B cell (primary cell): ENCODE measurements at regions of chr17 and their contacts with region 1.

Region 1: DNA sequence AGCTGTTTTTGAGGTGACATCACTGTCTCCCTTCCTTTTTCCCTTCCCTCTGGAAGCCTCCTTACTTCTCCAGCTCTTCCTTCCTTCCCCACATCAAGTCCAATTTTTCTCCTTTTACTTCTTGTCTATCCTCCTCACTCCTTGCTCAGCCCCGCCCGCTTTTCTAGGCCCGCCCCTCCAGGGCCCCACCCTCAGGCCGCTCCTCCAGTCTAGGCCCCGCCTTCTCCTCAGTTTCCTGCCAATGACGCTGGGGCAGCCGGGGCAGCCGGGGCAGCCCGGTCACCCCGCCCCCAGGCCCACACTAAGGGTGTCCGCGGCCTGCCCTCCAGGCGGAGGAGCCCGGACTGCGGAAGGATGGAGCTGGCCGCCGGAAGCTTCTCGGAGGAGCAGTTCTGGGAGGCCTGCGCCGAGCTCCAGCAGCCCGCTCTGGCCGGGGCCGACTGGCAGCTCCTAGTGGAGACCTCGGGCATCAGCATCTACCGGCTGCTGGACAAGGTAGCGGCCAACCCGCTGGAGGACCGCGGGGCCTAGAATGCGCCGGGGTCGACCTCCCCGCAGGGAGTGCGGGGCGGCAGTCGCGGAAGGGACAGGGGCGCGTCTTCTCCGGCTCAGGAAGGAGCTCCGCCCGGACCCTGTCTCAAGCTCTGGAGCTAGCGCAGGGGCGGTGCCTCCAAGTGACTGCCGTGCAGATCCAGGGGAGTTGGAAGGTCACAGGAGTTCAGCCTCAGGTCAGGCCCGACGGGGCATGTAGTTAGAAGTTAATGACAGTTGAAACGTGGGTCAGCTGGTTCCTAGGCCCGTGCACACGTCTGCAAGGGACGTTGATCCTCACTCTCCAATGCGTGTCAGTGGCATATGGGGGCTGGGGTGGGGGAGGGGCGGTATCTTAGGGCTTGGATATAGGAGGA is at the start of gene PCTP:
- DNase-seq: peak; percentile 84
- ATAC-seq: peak; percentile 98
- H3K4me3 ChIP-seq: peak within 1 kb of the TSS; percentile 40 to 93 (median 77)
- H3K4me3 Mint-ChIP-seq: peak within 1 kb of the TSS; percentile 84
- H3K27ac ChIP-seq: peak within 1 kb of the TSS; percentile 24 to 33
- H3K27ac Mint-ChIP-seq: peak within 1 kb of the TSS; percentile 22
- H3K4me1 ChIP-seq: peaks cover 5 to 11% of the 10 kb centered on the region in 2 donors
- H3K4me1 Mint-ChIP-seq: peaks cover 14% of the 10 kb centered on the region
- H3K27me3 ChIP-seq: peaks cover 0 to 4% (median 2%) of the 10 kb centered on the region in 4 experiments
- H3K27me3 Mint-ChIP-seq: peaks cover 23% of the 10 kb centered on the region
- CTCF ChIP-seq: peak; percentile 52
- total RNA-seq, gene PCTP: 6.4 and 9.0 TPM in 2 replicates

Region 2: DNA sequence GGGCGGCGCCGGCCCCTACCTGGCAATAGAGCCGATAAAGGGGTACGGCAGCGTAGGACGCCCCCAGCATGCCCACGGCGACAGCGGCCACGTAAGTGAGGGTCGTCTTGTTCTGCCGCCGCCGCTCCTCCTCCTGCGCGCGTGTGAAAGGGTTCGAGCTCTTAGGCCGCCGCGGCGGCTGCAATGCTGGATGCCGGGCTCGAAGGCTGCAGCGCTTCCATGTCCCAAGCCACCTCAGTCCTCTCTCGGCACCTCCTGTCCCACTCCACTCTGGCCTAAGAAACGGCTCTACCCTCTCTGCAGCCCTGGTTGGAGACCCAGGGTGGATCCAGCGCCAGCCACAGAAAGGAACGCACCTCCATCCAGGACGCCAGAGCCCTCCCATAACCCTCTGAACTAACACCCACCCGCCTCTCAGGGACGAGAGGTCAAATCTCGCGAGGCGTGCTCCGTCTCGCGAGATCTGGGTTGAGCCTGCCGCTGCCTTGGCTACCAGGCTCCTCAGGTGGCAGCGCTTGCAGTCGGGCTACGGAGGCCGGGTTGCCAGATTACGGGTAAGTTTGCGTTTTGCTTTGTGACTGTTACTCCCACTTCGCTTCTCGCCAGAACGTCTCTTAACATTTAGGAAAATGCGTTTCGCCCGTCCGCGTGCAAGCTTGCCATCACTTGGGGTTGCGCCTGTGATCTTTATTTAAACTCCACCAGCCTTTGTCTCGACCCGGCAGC is 782.6 kb before region 1 on chr17 and contains the starts of genes COX11 and STXBP4:
- CTCF ChIA-PET with region 1: no interaction called
- POLR2A ChIA-PET with region 1: no interaction called
- intact Hi-C with region 1: loop called (anchors 1 kb)
- DNase-seq: peak; percentile 98
- ATAC-seq: peak; percentile 96
- H3K4me3 ChIP-seq: peak within 1 kb of the TSS; percentile 69 to 96 (median 91)
- H3K4me3 Mint-ChIP-seq: no peak within 1 kb of the TSS
- H3K27ac ChIP-seq: peak within 1 kb of the TSS; percentile 47 to 80
- H3K27ac Mint-ChIP-seq: no peak within 1 kb of the TSS
- H3K4me1 ChIP-seq: peaks cover 8 to 21% of the 10 kb centered on the region in 2 donors
- H3K4me1 Mint-ChIP-seq: peaks cover 26% of the 10 kb centered on the region
- H3K27me3 ChIP-seq: no peaks in the 10 kb centered on the region
- H3K27me3 Mint-ChIP-seq: no peaks in the 10 kb centered on the region
- CTCF ChIP-seq: peak; percentile 12
- total RNA-seq, gene COX11: 54.9 and 63.7 TPM in 2 replicates
- total RNA-seq, gene STXBP4: 11.4 and 12.3 TPM in 2 replicates

Region 3: DNA sequence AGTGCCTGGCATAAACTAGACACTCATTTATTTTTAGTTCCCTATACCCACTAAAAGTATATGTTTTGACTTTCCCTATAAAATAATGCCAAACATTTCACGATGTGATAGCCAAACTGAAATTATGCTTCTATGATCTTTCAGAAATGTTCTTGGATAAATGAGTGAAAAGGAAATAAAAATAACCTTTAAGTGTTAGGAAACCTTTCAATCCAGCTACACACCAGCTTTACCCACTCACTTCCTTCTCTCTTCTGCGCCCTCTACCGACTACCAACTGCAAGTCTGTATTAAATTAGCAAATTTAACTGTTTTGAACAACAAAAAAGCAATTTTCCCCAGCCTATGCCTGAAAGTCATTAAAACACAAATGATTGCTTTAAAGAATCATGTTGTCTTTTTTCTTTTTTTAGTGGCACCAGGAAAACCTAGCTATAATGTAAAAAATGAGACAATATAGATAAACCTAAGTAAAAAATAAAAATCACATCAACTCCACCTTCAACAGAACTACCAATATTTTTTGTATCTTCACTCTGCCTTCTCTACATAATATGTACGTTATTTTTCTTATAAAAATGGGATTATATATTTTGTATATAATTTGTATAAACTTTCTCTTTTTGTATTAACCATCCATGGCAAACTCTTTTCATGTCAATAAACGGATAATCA is 15.1 kb before region 1 on chr17:
- CTCF ChIA-PET with region 1: interaction called, 19 read pairs
- POLR2A ChIA-PET with region 1: no interaction called
- intact Hi-C with region 1: no loop called
- DNase-seq: peak; percentile 54
- ATAC-seq: peak; percentile 60
- H3K4me3 ChIP-seq: no peak overlapping the region
- H3K4me3 Mint-ChIP-seq: no peak overlapping the region
- H3K27ac ChIP-seq: no peak overlapping the region
- H3K27ac Mint-ChIP-seq: no peak overlapping the region
- H3K4me1 ChIP-seq: peaks cover 6% of the 10 kb centered on the region in 2 donors
- H3K4me1 Mint-ChIP-seq: peaks cover 7% of the 10 kb centered on the region
- H3K27me3 ChIP-seq: peaks cover 0 to 3% (median 0%) of the 10 kb centered on the region in 4 experiments
- H3K27me3 Mint-ChIP-seq: peaks cover 33% of the 10 kb centered on the region
- CTCF ChIP-seq: peak; percentile 79

Region 4: DNA sequence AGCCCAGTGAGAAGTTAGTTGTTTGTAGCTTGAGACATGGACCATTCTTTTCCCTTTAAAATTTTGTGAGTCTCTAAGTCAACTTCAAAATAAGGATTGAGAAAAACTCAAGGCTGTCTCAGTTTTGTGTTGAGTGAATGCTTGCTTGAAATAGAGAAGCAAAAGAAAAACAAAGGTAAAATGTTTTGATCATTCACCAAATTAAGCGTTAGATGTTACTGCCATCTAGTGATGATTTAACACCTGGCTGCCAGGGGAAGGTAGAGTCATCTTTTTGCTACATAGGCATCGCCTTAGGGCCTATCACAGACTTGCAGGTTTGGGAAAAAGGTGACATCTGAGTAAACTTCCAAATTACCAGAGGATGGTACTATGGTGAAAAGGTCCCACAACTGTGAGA is 74.2 kb after region 1 on chr17:
- CTCF ChIA-PET with region 1: no interaction called
- POLR2A ChIA-PET with region 1: no interaction called
- intact Hi-C with region 1: no loop called
- DNase-seq: no peak
- ATAC-seq: no peak
- H3K4me3 ChIP-seq: no peak overlapping the region
- H3K4me3 Mint-ChIP-seq: no peak overlapping the region
- H3K27ac ChIP-seq: no peak overlapping the region
- H3K27ac Mint-ChIP-seq: no peak overlapping the region
- H3K4me1 ChIP-seq: no peaks in the 10 kb centered on the region
- H3K4me1 Mint-ChIP-seq: no peaks in the 10 kb centered on the region
- H3K27me3 ChIP-seq: no peaks in the 10 kb centered on the region
- H3K27me3 Mint-ChIP-seq: peaks cover 4% of the 10 kb centered on the region
- CTCF ChIP-seq: no peak